Uterus (tissue), 4 donors: ENCODE measurements at regions of chr2 and their contacts with region 1.

Region 1: DNA sequence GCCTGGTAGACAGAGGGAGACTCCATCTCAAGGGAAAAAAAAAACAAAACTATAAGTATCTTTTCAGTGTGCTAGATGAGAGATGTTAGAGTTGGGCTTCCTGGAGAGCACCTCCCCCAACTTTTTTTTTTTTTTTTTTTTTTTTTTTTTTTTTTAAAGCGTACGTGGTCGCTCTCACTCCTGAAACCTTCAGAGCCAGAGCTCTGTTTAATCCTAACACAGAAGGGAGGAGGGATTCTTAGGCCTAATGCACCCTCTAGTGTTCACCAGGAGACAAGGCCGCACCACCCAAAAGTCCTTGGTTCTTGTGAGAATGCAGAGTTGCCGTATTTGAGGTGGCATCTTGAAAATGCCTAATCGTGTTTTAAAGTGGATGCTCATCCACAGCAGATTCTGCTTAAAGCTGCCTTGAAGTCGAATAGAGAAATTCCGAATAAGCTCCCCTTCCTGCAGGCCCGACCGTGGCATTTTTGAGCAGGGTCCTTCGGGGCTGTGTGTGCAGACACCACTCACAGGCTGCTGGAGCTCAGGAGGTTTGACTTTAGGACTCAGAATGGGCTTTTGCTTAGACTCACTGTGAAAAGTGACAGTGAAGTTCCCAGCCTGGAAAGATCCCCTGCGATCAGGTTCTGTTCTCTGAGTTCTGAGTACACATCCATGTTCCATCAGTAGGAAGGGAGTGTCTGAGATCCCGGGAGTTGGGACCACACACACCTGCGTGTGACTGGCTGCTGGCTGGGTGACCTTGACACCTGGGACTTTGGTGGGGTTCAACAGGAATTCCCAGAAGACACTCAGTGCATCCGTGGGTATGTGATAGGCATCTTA is 252.6 kb downstream of the AGAP1 start:
- DNase-seq: peak; percentile 65 to 77
- H3K4me3 ChIP-seq: no peak overlapping the region
- H3K27ac ChIP-seq: no peak overlapping the region
- H3K4me1 ChIP-seq: no peaks in the 10 kb centered on the region
- H3K27me3 ChIP-seq: no peaks in the 10 kb centered on the region
- CTCF ChIP-seq: peak; percentile 75 to 85 (median 84)
- POLR2A ChIP-seq: no peak

Region 2: DNA sequence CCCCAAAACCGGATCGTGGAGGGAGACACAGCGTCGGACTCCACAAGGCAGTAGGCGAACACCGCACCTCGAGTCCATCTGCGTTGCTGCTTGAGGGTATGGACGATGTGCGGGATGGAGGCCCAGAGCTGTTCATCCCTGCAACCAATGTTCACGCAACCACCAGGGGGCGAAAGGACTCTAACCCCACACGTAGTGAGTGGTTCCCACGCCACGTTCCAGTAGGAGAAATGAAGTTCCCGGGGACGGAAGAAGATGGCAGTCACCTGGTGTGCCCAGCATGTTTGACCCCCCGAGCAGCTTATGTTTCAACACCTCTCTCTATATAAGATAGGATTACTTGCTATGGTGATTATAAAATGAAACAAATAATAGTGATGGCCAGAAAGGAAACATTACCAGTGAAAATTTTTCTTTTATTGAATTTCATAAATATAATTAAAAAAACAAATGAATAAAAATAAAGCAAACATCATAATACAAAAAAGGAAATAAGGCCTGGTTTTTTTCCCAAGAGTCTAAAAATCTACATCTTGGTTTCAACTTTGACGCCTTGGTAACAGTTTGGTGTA is 610.4 kb before region 1 on chr2:
- intact Hi-C with region 1: loop called (anchors 10 kb)
- DNase-seq: peak; percentile 67 to 73
- H3K4me3 ChIP-seq: no peak overlapping the region
- H3K27ac ChIP-seq: no peak overlapping the region
- H3K4me1 ChIP-seq: no peaks in the 10 kb centered on the region
- H3K27me3 ChIP-seq: no peaks in the 10 kb centered on the region
- CTCF ChIP-seq: peak; percentile 50 to 78 (median 66)
- POLR2A ChIP-seq: no peak

Region 3: GRCh38 chr2:235659767-235660322 is 86.6 kb before region 1 on chr2:
- intact Hi-C with region 1: no loop called
- DNase-seq: peak in 1 of 2 donors; percentile 30
- H3K4me3 ChIP-seq: no peak overlapping the region
- H3K27ac ChIP-seq: peak overlapping the region; percentile 4 to 37
- H3K4me1 ChIP-seq: peaks cover 0 to 10% of the 10 kb centered on the region in 2 donors
- H3K27me3 ChIP-seq: no peaks in the 10 kb centered on the region
- CTCF ChIP-seq: no peak
- POLR2A ChIP-seq: no peak